Lower lobe of right lung (tissue), 2 donors: ENCODE measurements at regions of chr2 and their contacts with region 1.

Region 1: GRCh38 chr2:74714696-74715077 is 60.6 kb downstream of the SEMA4F start:
- DNase-seq: no peak
- ATAC-seq: no peak
- H3K4me3 ChIP-seq: peak overlapping the region; percentile 66
- H3K27ac ChIP-seq: no peak overlapping the region
- H3K4me1 ChIP-seq: peaks cover 9% of the 10 kb centered on the region
- H3K27me3 ChIP-seq: no peaks in the 10 kb centered on the region
- CTCF ChIP-seq: no peak

Region 2: GRCh38 chr2:74789271-74789670 is 74.6 kb after region 1 on chr2:
- intact Hi-C with region 1: no loop called
- DNase-seq: no peak
- ATAC-seq: peak; percentile 51 to 65
- H3K4me3 ChIP-seq: no peak overlapping the region
- H3K27ac ChIP-seq: no peak overlapping the region
- H3K4me1 ChIP-seq: no peaks in the 10 kb centered on the region
- H3K27me3 ChIP-seq: no peaks in the 10 kb centered on the region
- CTCF ChIP-seq: no peak

Region 3: GRCh38 chr2:74874851-74875321 is 160.2 kb after region 1 on chr2:
- intact Hi-C with region 1: loop called (anchors 5 kb)
- DNase-seq: no peak
- ATAC-seq: peak; percentile 40 to 52
- H3K4me3 ChIP-seq: no peak overlapping the region
- H3K27ac ChIP-seq: peak overlapping the region; percentile 64
- H3K4me1 ChIP-seq: peaks cover 40% of the 10 kb centered on the region
- H3K27me3 ChIP-seq: no peaks in the 10 kb centered on the region
- CTCF ChIP-seq: no peak

Region 4: DNA sequence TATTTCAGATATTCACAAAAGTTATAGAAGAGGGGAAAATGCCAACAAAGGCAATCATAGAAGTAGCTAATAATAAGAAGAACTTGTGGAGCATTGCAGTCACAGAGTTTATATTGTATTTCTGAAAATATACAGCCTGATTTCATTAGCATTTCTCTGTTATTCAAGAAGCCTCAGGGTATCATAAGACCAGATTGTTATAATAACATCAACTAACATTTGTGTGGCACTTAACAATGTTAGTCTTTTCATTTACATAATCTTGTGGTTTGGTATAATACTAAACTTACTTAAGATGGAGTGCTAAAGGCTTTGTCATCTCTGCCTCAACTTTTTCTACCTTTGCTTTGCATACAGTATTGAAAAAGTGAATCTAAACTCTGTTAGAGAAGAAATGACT is 546.3 kb after region 1 on chr2:
- intact Hi-C with region 1: no loop called
- DNase-seq: no peak
- ATAC-seq: no peak
- H3K4me3 ChIP-seq: no peak overlapping the region
- H3K27ac ChIP-seq: no peak overlapping the region
- H3K4me1 ChIP-seq: no peaks in the 10 kb centered on the region
- H3K27me3 ChIP-seq: no peaks in the 10 kb centered on the region
- CTCF ChIP-seq: no peak

Region 5: GRCh38 chr2:75290600-75291150 is 576.0 kb after region 1 on chr2:
- intact Hi-C with region 1: no loop called
- DNase-seq: no peak
- ATAC-seq: no peak
- H3K4me3 ChIP-seq: no peak overlapping the region
- H3K27ac ChIP-seq: no peak overlapping the region
- H3K4me1 ChIP-seq: no peaks in the 10 kb centered on the region
- H3K27me3 ChIP-seq: no peaks in the 10 kb centered on the region
- CTCF ChIP-seq: no peak